ENCODE measurements at regions of chr3 and their contacts with region 1.

Region 1: DNA sequence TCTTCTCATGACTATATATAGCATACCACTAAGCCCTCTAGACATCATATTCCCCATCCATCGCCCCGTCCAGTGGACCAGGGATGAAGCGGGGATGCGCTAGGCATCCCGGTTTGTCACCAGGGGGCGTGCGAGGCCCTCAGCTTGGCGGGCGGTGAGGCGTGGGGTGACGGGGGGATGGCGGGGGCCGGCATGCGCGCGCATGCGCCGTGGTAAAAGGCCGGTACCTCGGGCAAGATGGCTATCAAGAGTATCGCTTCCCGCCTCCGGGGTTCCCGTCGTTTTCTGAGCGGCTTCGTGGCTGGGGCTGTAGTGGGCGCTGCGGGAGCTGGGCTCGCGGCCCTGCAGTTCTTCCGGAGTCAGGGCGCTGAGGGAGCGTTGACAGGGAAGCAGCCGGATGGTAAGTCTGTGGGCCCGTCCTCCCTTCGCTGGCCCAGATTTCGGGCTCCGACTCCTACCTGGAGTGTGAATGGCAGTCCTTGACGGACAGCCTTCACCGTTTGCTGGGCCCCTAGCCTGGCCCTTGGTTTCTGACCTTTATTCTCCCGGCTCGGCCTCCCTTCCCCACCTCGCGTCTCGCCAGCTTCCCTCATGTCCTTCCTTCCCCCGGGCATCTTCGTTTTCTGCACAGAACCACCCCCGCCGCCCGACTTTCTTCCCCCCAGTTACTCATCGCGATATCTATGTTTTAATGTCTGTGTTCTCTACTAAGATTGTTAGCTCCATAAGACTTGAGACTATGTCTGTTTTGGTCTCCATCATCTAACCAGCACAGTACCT is at the start of gene EXOG:
- DNase-seq: peak; percentile 93
- H3K4me3 ChIP-seq: peak within 1 kb of the TSS; percentile 73 to 84 (median 80)
- H3K27ac ChIP-seq: peak within 1 kb of the TSS; percentile 4
- H3K4me1 ChIP-seq: peaks cover 7% of the 10 kb centered on the region
- H3K27me3 ChIP-seq: no peaks in the 10 kb centered on the region
- CTCF ChIP-seq: peak; percentile 84 to 94
- POLR2A ChIP-seq: peak; percentile 77
- total RNA-seq, gene EXOG: 21.8 and 21.9 TPM in 2 replicates

Region 2: DNA sequence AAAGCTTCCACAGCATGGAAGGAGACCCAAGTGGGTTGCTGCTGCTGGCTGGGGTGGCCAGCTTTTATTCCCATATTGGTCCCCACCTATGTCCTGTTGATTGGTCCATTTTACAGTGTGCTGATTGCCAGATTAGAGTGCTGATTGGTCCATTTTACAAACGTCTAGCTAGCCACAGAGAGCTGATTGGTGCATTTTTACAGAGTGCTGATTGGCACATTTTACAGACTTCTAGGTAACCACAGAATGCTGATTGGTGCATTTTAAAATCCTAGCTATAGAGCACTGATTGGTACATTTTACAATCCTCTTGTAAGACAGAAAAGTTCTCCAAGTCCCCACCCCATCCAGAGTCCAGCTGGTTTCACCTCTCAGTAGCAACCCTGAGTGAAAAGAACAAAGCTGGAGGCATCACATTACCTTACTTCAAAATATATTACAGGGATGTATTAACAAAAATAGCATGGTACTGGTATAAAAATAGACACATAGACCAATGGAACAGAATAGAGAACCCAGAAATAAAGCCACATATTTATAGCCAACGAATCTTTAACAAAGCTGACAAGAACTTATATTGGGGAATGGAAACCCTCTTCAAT is 50.1 kb before region 1 on chr3:
- CTCF ChIA-PET with region 1: no interaction called
- POLR2A ChIA-PET with region 1: no interaction called
- dilution Hi-C with region 1: no loop called
- intact Hi-C with region 1: no loop called
- DNase-seq: no peak
- H3K4me3 ChIP-seq: no peak overlapping the region
- H3K27ac ChIP-seq: no peak overlapping the region
- H3K4me1 ChIP-seq: no peaks in the 10 kb centered on the region
- H3K27me3 ChIP-seq: no peaks in the 10 kb centered on the region
- CTCF ChIP-seq: no peak
- POLR2A ChIP-seq: no peak

Region 3: DNA sequence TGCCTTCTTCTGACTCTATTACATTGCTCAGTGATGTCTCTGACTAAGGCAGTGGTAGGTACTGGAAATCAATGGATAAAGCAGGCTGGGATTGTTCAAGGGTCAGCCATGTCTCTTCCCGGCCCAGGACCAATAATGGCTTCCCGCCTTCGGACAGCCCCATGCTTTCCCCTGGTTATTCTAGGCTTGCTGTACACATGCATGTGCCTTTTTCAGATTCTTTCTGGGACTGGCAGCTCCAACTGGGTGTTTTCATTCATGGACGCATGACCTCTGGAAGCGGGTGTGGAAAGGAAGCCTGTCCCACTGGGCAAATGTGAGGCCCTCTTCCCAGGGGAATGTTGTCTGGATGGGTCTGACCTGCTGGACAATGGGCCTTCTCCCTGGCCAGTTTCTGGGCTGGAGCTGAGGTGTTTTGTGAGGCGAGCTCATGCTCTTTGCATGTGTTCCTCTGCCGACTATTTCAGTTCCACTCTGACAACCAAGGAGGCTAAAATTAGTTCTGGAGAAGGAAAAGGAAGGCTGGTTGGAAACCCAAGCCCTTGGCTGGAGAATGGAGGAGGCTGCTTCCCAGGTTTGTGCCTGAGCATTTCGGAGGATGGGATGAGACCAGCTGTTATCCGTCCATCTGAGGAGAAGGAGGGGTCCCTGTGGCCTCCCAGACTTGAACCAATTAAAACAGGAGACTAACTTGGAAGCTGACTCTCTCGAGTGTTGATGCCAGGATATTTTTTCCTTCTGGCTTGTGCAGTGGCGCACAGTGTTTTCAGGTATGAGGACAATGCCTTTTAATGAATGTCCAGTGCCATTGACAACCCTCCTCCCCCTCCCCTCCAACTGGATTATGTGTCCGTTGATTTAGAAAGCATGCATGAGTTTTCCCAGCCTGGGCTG is 35.7 kb before region 1 on chr3:
- CTCF ChIA-PET with region 1: no interaction called
- POLR2A ChIA-PET with region 1: no interaction called
- dilution Hi-C with region 1: no loop called
- intact Hi-C with region 1: no loop called
- DNase-seq: no peak
- H3K4me3 ChIP-seq: no peak overlapping the region
- H3K27ac ChIP-seq: no peak overlapping the region
- H3K4me1 ChIP-seq: no peaks in the 10 kb centered on the region
- H3K27me3 ChIP-seq: no peaks in the 10 kb centered on the region
- CTCF ChIP-seq: no peak
- POLR2A ChIP-seq: no peak

Region 4: GRCh38 chr3:38533285-38533976 is 37.1 kb after region 1 on chr3:
- CTCF ChIA-PET with region 1: no interaction called
- POLR2A ChIA-PET with region 1: no interaction called
- dilution Hi-C with region 1: no loop called
- intact Hi-C with region 1: no loop called
- DNase-seq: no peak
- H3K4me3 ChIP-seq: no peak overlapping the region
- H3K27ac ChIP-seq: no peak overlapping the region
- H3K4me1 ChIP-seq: no peaks in the 10 kb centered on the region
- H3K27me3 ChIP-seq: no peaks in the 10 kb centered on the region
- CTCF ChIP-seq: no peak
- POLR2A ChIP-seq: no peak

Region 5: DNA sequence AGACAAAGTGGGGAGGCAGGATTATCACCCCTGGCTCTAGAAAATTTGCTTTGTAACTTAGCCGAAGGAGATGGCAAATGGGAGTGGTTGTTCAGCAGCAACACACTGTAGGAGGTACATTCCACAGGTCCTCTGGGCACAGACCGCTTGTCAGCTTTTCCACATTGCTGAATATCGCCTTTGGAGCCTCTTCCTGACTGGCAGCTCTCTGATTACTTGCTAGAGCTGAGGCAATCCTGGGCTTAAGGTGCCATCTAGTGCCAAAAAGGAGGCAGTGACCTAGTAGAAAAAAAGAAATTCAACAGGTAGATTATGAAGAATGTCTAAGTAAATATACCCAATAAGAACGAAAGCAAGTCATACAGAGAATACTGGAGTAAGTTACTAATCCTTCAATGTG is 166.2 kb after region 1 on chr3:
- CTCF ChIA-PET with region 1: interaction called, 31 read pairs
- POLR2A ChIA-PET with region 1: interaction called, 15 read pairs
- dilution Hi-C with region 1: no loop called
- intact Hi-C with region 1: loop called (anchors 1 kb)
- DNase-seq: peak; percentile 58
- H3K4me3 ChIP-seq: no peak overlapping the region
- H3K27ac ChIP-seq: no peak overlapping the region
- H3K4me1 ChIP-seq: no peaks in the 10 kb centered on the region
- H3K27me3 ChIP-seq: peaks cover 16 to 19% of the 10 kb centered on the region in 2 experiments
- CTCF ChIP-seq: peak; percentile 41 to 52
- POLR2A ChIP-seq: no peak

Measured in endothelial cell of umbilical vein (primary cell).